Gastrocnemius medialis (tissue), 4 donors: ENCODE measurements at regions of chr11 and their contacts with region 1.

Region 1: DNA sequence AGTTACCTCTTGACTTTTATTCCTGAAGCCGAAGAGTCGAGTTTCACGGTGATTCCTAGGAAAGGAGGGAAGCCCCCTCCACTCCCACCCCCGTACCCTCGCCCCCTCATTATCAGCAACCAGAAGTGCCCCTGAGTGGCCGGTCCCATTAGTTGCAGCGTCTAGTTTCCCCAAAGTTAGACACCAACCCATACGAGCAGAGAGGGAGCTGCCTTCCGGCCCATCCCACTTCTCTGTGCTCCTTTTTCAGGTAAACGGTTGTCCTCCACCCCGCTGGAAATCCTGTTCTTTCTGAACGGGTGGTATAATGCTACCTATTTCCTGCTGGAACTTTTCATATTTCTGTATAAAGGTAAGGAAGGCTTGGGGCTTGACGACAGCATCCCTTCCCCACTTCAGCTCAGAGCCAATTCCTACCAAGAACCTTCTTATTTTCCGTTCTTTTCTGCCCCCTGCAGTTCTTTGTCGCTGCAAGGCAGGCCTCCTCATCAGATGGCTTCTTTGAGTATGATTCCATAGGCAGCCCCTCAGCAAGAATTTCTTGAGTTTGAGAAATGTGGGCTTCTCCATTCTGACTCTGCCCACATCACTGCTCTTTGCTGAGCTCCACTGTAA is 701 bp downstream of the TMEM216 start:
- DNase-seq: no peak
- ATAC-seq: peak in 1 of 2 donors; percentile 37
- H3K4me3 ChIP-seq: peak overlapping the region; percentile 89 to 93 (median 92)
- H3K27ac ChIP-seq: peak overlapping the region; percentile 76 to 89 (median 86)
- H3K4me1 ChIP-seq: peaks cover 9 to 18% of the 10 kb centered on the region in 2 donors
- H3K27me3 ChIP-seq: no peaks in the 10 kb centered on the region
- CTCF ChIP-seq: no peak
- POLR2A ChIP-seq: no peak

Region 2: GRCh38 chr11:61429691-61430582 is 36.8 kb after region 1 on chr11 and contains the starts of genes CPSF7 and SDHAF2:
- in situ Hi-C with region 1: no loop called
- intact Hi-C with region 1: loop called (anchors 1 kb)
- DNase-seq: peak; percentile 94 to 95
- ATAC-seq: peak; percentile 94 to 98
- H3K4me3 ChIP-seq: peak within 1 kb of the TSS; percentile 73 to 89 (median 76)
- H3K27ac ChIP-seq: peak within 1 kb of the TSS; percentile 90 to 98 (median 94)
- H3K4me1 ChIP-seq: peaks cover 19 to 30% of the 10 kb centered on the region in 2 donors
- H3K27me3 ChIP-seq: no peaks in the 10 kb centered on the region
- CTCF ChIP-seq: peak in 1 of 5 experiments; percentile 13
- POLR2A ChIP-seq: peak; percentile 82 to 87
- total RNA-seq, gene CPSF7: 38.9 to 180 (median 42.5) TPM
- total RNA-seq, gene SDHAF2: 32.1 to 84.4 (median 53.8) TPM

Region 3: GRCh38 chr11:61695917-61696316 is 302.8 kb after region 1 on chr11:
- in situ Hi-C with region 1: no loop called
- intact Hi-C with region 1: no loop called
- DNase-seq: peak; percentile 75 to 85
- ATAC-seq: peak; percentile 51 to 58
- H3K4me3 ChIP-seq: peak overlapping the region; percentile 20 to 50 (median 38)
- H3K27ac ChIP-seq: peak overlapping the region; percentile 84 to 97 (median 90)
- H3K4me1 ChIP-seq: peaks cover 73 to 80% of the 10 kb centered on the region in 2 donors
- H3K27me3 ChIP-seq: no peaks in the 10 kb centered on the region
- CTCF ChIP-seq: no peak
- POLR2A ChIP-seq: peak in 1 of 2 donors; percentile 27